Caco-2 (cell line): ENCODE measurements at regions of chr2 and their contacts with region 1.

Region 1: DNA sequence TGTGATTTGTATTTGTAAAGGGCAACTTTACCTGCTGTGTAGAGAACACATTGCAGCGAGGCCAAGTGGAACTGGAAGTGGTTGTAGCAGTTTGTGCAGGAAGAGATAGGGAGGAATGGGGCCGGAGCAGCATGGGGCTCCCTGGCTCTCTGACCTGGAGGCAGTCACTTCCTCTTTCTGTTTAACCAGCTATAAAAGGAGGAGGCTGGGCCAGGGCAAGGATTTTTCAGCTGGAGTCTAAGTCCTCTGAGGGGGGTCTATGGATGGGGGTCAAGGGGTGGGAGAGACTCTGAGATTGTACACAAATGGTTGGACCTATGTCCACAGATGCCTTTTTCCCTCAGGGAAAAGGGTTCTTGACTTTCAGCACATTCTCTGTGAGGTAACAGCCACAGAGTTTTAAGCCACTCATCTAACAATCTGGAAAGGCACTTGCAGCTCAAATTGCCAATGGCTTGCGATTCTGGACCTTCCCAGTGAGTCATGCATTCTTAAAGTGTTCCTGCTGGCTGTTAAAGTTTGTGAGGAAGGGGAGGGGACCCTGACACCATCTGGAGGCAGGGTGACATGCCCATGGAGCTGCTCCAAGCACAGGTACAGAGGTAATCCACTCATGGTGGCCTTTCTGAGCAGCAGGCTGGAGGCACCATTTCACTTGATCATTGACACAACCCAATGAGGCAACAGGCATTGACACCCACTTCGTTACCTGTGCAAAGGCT is 347.0 kb downstream of the CYRIA start:
- DNase-seq: peak; percentile 71 to 85
- H3K4me3 ChIP-seq: no peak overlapping the region
- H3K4me3 Mint-ChIP-seq: peak overlapping the region; percentile 43
- H3K27ac Mint-ChIP-seq: peak overlapping the region; percentile 96
- H3K4me1 ChIP-seq: peaks cover 57% of the 10 kb centered on the region
- H3K4me1 Mint-ChIP-seq: peaks cover 44% of the 10 kb centered on the region
- H3K27me3 ChIP-seq: no peaks in the 10 kb centered on the region
- H3K27me3 Mint-ChIP-seq: no peaks in the 10 kb centered on the region
- CTCF ChIP-seq: no peak

Region 2: GRCh38 chr2:16240402-16240801 is 78.2 kb before region 1 on chr2:
- CTCF ChIA-PET with region 1: no interaction called
- POLR2A ChIA-PET with region 1: no interaction called
- intact Hi-C with region 1: loop called (anchors 5 kb)
- DNase-seq: no peak
- H3K4me3 ChIP-seq: no peak overlapping the region
- H3K4me3 Mint-ChIP-seq: no peak overlapping the region
- H3K27ac Mint-ChIP-seq: no peak overlapping the region
- H3K4me1 ChIP-seq: peaks cover 62% of the 10 kb centered on the region
- H3K4me1 Mint-ChIP-seq: peaks cover 36% of the 10 kb centered on the region
- H3K27me3 ChIP-seq: no peaks in the 10 kb centered on the region
- H3K27me3 Mint-ChIP-seq: no peaks in the 10 kb centered on the region
- CTCF ChIP-seq: no peak

Region 3: GRCh38 chr2:16330571-16330970 is 11.9 kb after region 1 on chr2:
- CTCF ChIA-PET with region 1: no interaction called
- POLR2A ChIA-PET with region 1: no interaction called
- intact Hi-C with region 1: loop called (anchors 1 kb)
- DNase-seq: peak; percentile 93 to 96
- H3K4me3 ChIP-seq: no peak overlapping the region
- H3K4me3 Mint-ChIP-seq: peak overlapping the region; percentile 58
- H3K27ac Mint-ChIP-seq: peak overlapping the region; percentile 98
- H3K4me1 ChIP-seq: peaks cover 62% of the 10 kb centered on the region
- H3K4me1 Mint-ChIP-seq: peaks cover 76% of the 10 kb centered on the region
- H3K27me3 ChIP-seq: no peaks in the 10 kb centered on the region
- H3K27me3 Mint-ChIP-seq: no peaks in the 10 kb centered on the region
- CTCF ChIP-seq: no peak

Region 4: DNA sequence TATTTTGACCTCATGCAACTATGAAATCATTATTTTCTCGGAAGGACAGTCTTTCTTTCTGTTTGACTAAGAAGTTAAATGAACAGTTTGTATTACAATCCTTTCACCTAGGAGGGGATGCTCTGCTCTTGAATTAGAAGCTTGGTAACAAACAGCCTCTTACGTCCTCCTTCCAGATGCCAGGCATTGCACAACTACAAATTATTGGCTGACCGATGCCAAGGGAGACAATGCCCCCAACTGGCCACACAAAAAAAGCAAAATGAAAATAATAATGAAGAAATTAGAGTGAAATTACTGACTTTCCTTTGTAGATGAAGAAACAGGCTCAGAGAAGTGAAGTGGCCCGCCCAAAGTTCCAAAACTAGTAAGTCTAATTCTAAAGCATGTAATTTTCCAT is 169.1 kb after region 1 on chr2:
- CTCF ChIA-PET with region 1: no interaction called
- POLR2A ChIA-PET with region 1: no interaction called
- intact Hi-C with region 1: loop called (anchors 2 kb)
- DNase-seq: peak; percentile 42 to 50
- H3K4me3 ChIP-seq: no peak overlapping the region
- H3K4me3 Mint-ChIP-seq: no peak overlapping the region
- H3K27ac Mint-ChIP-seq: peak overlapping the region; percentile 31
- H3K4me1 ChIP-seq: no peaks in the 10 kb centered on the region
- H3K4me1 Mint-ChIP-seq: peaks cover 16% of the 10 kb centered on the region
- H3K27me3 ChIP-seq: no peaks in the 10 kb centered on the region
- H3K27me3 Mint-ChIP-seq: no peaks in the 10 kb centered on the region
- CTCF ChIP-seq: peak; percentile 34 to 59

Region 5: DNA sequence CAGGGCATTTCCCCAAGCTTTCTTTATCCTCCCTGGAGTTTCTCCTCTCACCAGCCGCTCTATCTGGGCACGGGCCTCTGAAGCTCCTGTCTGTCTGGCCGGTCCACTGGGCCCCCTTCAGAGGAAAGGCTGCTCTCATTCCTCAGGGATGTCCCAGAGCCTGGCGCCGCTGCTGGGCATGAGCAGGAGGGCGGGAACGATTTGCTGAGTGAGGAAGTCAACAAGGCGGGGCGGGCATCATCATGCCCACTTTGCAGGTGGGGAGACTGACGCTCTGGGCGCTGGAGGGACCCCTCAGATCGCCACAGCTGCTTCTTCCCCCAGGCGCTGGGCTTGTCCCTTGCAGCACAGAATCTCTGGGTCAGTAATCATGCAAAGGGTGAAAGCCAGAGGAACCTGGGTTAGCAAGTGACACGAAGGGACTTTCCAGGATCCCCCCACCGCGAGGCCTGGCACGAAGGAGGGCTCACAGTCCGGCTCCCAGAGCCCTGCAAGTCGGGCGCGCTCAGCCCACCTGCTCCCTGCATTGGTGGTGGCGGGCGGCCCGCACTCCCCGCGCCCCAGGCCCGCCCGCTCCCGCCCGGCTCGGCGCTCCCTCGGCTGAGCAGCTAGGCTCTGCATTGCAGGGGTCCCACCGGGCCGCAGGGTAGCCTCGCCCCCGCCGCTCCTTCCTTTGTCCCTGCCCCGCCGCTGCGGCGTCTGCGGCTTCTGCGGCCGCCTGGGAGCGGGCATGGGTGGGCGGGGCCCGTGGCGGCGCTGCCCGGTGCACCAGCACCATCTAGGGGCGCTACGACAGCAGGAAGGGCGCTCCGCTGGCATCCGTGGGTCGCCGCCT is 189.2 kb after region 1 on chr2:
- CTCF ChIA-PET with region 1: no interaction called
- POLR2A ChIA-PET with region 1: no interaction called
- intact Hi-C with region 1: loop called (anchors 2 kb)
- DNase-seq: peak; percentile 66 to 82
- H3K4me3 ChIP-seq: peak overlapping the region; percentile 26
- H3K4me3 Mint-ChIP-seq: peak overlapping the region; percentile 61
- H3K27ac Mint-ChIP-seq: peak overlapping the region; percentile 37
- H3K4me1 ChIP-seq: peaks cover 36% of the 10 kb centered on the region
- H3K4me1 Mint-ChIP-seq: peaks cover 12% of the 10 kb centered on the region
- H3K27me3 ChIP-seq: no peaks in the 10 kb centered on the region
- H3K27me3 Mint-ChIP-seq: no peaks in the 10 kb centered on the region
- CTCF ChIP-seq: peak; percentile 83 to 91